IMR-90 (cell line): ENCODE measurements at regions of chr2 and their contacts with region 1.

Region 1: DNA sequence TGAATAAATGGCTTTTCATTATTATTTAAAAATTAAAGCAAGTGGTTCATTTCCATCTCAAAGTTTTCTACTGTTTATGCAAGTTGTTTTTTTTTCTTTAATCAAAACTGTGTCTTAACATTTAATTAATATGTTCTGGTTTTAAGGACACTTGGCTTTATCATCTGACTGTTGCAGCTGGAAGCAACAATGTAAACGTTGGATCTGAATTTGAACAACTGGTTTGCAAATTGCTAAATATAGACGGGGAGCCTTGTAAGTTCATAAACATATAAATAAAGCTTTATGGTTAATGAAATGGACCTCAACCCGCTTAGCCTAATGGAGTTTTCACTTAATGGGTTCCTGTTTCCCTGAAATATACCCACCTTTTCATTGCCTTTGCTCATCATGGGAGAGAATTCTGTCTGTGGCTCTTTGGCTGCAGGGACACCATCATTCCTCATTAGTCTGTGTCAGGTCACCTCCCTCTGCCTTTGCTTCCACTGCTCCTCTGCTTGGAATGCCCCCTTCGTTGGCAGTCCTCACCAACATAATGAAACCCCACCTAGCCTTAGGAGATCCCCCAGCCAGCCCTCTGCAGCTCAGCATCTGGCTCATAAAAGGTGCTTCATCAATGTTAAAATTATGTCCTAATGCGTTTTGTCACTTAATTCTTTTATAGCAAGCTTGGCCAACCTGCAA is 44.2 kb upstream of the DYNC2LI1 start:
- DNase-seq: no peak
- ATAC-seq: no peak
- H3K4me3 ChIP-seq: no peak overlapping the region
- H3K27ac ChIP-seq: no peak overlapping the region
- H3K4me1 ChIP-seq: peaks cover 3% of the 10 kb centered on the region; the same call in 1 of the 2 replicates
- H3K27me3 ChIP-seq: no peaks in the 10 kb centered on the region
- CTCF ChIP-seq: no peak
- POLR2A ChIP-seq: no peak
- RAD21 ChIP-seq: no peak

Region 2: GRCh38 chr2:43707255-43708015 is 22.2 kb before region 1 on chr2:
- CTCF ChIA-PET with region 1: no interaction called
- POLR2A ChIA-PET with region 1: no interaction called
- dilution Hi-C with region 1: no loop called
- in situ Hi-C with region 1: no loop called
- intact Hi-C with region 1: no loop called
- DNase-seq: peak; percentile 87
- ATAC-seq: peak; percentile 91
- H3K4me3 ChIP-seq: no peak overlapping the region
- H3K27ac ChIP-seq: no peak overlapping the region
- H3K4me1 ChIP-seq: peaks cover 5% of the 10 kb centered on the region; the same call in 1 of the 2 replicates
- H3K27me3 ChIP-seq: no peaks in the 10 kb centered on the region
- CTCF ChIP-seq: no peak
- POLR2A ChIP-seq: no peak
- RAD21 ChIP-seq: no peak

Region 3: GRCh38 chr2:43745457-43745856 is 15.8 kb after region 1 on chr2:
- CTCF ChIA-PET with region 1: no interaction called
- POLR2A ChIA-PET with region 1: interaction called, 11 read pairs
- dilution Hi-C with region 1: no loop called
- in situ Hi-C with region 1: no loop called
- intact Hi-C with region 1: no loop called
- DNase-seq: peak; percentile 71
- ATAC-seq: peak; percentile 81
- H3K4me3 ChIP-seq: no peak overlapping the region
- H3K27ac ChIP-seq: peak overlapping the region; percentile 14; the same call in 1 of the 2 replicates
- H3K4me1 ChIP-seq: peaks cover 2% of the 10 kb centered on the region; the same call in 1 of the 2 replicates
- H3K27me3 ChIP-seq: no peaks in the 10 kb centered on the region
- CTCF ChIP-seq: no peak
- POLR2A ChIP-seq: no peak
- RAD21 ChIP-seq: no peak